ENCODE measurements at regions of chr5 and their contacts with region 1.

Region 1: DNA sequence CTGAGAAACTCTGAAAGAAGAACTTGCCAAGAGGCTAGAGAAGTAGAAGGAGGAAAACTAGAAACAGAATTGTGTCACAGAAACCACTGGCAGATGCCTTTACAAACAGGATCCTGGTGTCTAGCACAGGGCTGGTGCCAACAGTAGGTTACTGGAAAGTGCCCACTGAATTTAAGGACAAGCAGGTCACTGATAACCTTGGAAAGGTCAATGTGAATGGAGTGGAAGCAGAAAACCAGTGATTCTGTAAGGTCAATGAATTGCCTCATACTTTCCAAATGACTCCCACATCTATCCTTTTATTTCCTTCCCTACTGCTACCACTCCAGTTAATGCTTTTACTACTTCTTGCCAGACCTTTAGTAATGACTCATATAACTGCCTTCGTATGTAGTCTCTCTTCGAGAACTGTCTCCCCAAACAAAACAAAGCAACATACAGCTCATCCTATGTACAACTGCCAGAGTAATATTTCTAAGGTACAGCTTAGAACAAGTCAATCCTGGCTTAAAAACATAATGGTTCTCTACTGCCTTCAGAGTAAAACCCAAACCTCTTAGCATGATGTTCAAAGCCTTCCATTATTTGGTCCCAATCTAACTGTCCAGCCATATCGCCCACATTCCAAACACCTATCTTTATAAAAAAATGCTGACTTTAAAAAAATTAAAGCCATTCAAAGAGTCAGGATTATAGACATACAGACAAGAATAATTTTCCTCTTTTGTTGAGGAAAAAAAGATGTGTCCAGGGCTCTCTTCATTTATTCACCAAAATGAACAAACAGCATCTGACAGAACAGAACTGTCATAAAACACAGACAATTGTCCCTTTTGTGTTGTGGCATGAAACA is 52.5 kb downstream of the NR3C1 start:
- DNase-seq: no peak
- H3K4me3 Mint-ChIP-seq: no peak overlapping the region
- H3K27ac Mint-ChIP-seq: no peak overlapping the region
- H3K4me1 Mint-ChIP-seq: peaks cover 21% of the 10 kb centered on the region
- H3K27me3 Mint-ChIP-seq: no peaks in the 10 kb centered on the region

Region 2: DNA sequence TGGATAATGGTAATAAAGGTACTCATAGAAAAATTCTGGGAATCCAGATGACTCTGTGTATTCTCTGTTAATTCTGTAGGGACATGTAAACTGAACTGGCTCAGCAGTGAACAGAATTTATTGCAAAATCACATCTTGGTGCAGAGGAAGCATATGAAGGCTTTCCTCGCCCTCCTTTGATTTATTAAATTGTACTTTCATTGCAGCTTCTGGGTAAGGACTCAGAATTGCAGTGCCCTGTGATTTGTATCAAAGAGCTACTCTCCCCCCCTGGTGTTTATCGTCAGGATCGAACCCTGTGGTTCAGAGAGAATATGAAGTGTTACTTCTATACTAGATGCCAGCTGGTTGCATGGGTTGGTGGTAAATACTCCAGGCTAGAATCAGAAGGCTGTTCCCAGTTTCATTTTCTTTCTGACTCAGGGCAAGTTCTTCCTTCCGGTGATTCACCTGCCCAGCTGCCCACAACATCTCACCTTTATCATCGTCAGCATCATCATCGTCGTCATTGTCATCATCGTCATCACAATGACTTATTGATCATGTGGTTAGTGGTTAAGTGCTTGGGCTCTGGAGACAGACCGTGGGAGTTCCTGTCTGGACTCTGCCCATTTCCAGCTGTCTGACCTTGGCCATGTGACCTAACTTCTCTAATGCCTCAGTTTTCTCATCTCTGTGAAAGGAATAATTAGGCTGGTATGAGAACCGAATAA is 342.0 kb before region 1 on chr5:
- intact Hi-C with region 1: loop called (anchors 2 kb)
- DNase-seq: peak; percentile 82
- H3K4me3 Mint-ChIP-seq: peak overlapping the region; percentile 24
- H3K27ac Mint-ChIP-seq: peak overlapping the region; percentile 86
- H3K4me1 Mint-ChIP-seq: peaks cover 79% of the 10 kb centered on the region
- H3K27me3 Mint-ChIP-seq: no peaks in the 10 kb centered on the region

Region 3: GRCh38 chr5:143119291-143119769 is 231.6 kb before region 1 on chr5:
- intact Hi-C with region 1: loop called (anchors 5 kb)
- DNase-seq: no peak
- H3K4me3 Mint-ChIP-seq: no peak overlapping the region
- H3K27ac Mint-ChIP-seq: peak overlapping the region; percentile 79
- H3K4me1 Mint-ChIP-seq: peaks cover 60% of the 10 kb centered on the region
- H3K27me3 Mint-ChIP-seq: peaks cover 1% of the 10 kb centered on the region

Region 4: GRCh38 chr5:143222287-143223231 is 128.4 kb before region 1 on chr5:
- intact Hi-C with region 1: loop called (anchors 2 kb)
- DNase-seq: peak; percentile 59
- H3K4me3 Mint-ChIP-seq: peak overlapping the region; percentile 60
- H3K27ac Mint-ChIP-seq: peak overlapping the region; percentile 92
- H3K4me1 Mint-ChIP-seq: peaks cover 77% of the 10 kb centered on the region
- H3K27me3 Mint-ChIP-seq: no peaks in the 10 kb centered on the region

Region 5: GRCh38 chr5:143386725-143387124 is 35.7 kb after region 1 on chr5:
- intact Hi-C with region 1: loop called (anchors 2 kb)
- DNase-seq: no peak
- H3K4me3 Mint-ChIP-seq: no peak overlapping the region
- H3K27ac Mint-ChIP-seq: peak overlapping the region; percentile 12
- H3K4me1 Mint-ChIP-seq: peaks cover 44% of the 10 kb centered on the region
- H3K27me3 Mint-ChIP-seq: no peaks in the 10 kb centered on the region

Region 6: GRCh38 chr5:143506881-143507551 is 156.0 kb after region 1 on chr5:
- intact Hi-C with region 1: no loop called
- DNase-seq: no peak
- H3K4me3 Mint-ChIP-seq: no peak overlapping the region
- H3K27ac Mint-ChIP-seq: no peak overlapping the region
- H3K4me1 Mint-ChIP-seq: no peaks in the 10 kb centered on the region
- H3K27me3 Mint-ChIP-seq: peaks cover 4% of the 10 kb centered on the region

Measured in activated T-helper 1 cell treated with anti-CD3 and anti-CD28 coated beads, Interleukin-12 subunit alpha, Interleukin-12 subunit beta, Interleukin-2, Interleukin-4 antibody, amounts not matched to agents 30 ng/mL and 10 ng/mL and 1 ng/mL, durations not matched to agents 14 hours and 24 hours and 36 hours (primary cell).